ENCODE measurements at regions of chr3 and their contacts with region 1.

Region 1: GRCh38 chr3:128242818-128243601 is 89.7 kb downstream of the EEFSEC start:
- DNase-seq: no peak
- H3K4me3 ChIP-seq: no peak overlapping the region
- H3K27ac ChIP-seq: no peak overlapping the region
- H3K4me1 ChIP-seq: no peaks in the 10 kb centered on the region
- H3K27me3 ChIP-seq: no peaks in the 10 kb centered on the region
- CTCF ChIP-seq: no peak
- POLR2A ChIP-seq: no peak

Region 2: DNA sequence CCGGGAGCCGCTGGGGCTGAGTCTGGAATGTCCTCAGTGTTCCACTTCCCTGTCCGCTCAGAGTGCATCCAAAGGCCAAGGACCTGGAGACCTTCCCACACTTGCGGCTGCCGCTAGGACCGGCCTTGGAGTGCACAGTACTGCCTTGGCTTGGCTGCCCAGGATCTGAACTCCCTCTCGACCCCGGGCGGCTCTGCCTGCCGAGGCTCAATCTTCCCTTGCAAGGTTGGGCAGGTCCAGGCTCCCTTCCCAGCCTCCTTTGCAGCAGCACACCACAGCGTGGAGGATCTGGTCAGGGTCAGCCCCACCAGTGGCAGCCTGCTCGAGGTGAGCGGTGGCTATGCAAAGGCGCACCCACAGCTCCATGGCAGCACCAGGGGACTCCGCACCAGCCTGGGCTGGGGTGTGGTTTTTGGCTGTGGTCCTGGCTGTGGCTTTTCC is 1190.9 kb before region 1 on chr3:
- intact Hi-C with region 1: loop called (anchors 10 kb)
- DNase-seq: peak in 1 of 2 donors; percentile 80
- H3K4me3 ChIP-seq: no peak overlapping the region
- H3K27ac ChIP-seq: peak overlapping the region; percentile 64
- H3K4me1 ChIP-seq: peaks cover 6 to 19% of the 10 kb centered on the region in 2 donors
- H3K27me3 ChIP-seq: no peaks in the 10 kb centered on the region
- CTCF ChIP-seq: no peak
- POLR2A ChIP-seq: no peak